ENCODE measurements at regions of chr10 and their contacts with region 1.

Region 1: GRCh38 chr10:124827474-124827873 is 25.9 kb downstream of the ABRAXAS2 start:
- DNase-seq: peak; percentile 51
- H3K4me3 ChIP-seq: no peak overlapping the region
- H3K27ac ChIP-seq: no peak overlapping the region
- H3K4me1 ChIP-seq: no peaks in the 10 kb centered on the region
- CTCF ChIP-seq: peak; percentile 84

Region 2: DNA sequence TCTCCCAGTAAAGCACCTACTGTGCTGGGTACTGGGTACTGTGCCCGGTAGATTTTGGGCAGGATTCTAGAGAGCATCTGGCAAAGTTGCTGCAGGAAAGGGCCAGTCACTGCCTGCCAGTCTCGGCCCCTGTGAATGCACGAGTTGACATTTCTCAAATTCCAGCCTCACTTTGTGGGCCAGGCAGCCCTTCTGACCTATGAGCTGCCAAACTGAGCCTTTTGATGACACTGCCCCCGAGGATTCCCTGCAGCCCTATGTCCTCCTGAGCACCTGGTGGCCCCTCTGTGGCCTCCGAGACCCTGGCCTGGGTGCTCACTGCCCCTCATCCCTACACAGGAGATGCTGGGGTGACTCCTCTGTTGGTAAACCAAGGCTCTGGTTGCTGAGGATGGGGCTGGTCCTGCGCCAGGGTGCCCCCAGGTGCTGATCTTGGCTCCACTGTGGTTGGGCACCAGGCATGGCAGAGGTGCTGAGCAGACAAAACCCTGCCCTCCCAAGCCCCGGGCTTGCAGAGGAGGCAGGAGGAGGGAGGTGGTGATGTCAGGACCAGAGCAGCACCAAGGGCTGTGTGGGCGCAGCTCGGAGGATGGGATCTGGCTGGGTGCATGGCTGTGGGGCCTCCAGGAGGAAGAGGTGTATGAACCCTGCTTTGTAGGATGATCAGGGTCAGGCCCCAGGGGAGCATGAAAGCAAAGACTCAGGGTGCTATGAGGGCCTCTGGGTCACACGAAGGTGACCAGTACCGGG is 349.7 kb before region 1 on chr10:
- CTCF ChIA-PET with region 1: no interaction called
- POLR2A ChIA-PET with region 1: no interaction called
- intact Hi-C with region 1: no loop called
- DNase-seq: no peak
- H3K4me3 ChIP-seq: no peak overlapping the region
- H3K27ac ChIP-seq: no peak overlapping the region
- H3K4me1 ChIP-seq: no peaks in the 10 kb centered on the region
- CTCF ChIP-seq: no peak

Region 3: DNA sequence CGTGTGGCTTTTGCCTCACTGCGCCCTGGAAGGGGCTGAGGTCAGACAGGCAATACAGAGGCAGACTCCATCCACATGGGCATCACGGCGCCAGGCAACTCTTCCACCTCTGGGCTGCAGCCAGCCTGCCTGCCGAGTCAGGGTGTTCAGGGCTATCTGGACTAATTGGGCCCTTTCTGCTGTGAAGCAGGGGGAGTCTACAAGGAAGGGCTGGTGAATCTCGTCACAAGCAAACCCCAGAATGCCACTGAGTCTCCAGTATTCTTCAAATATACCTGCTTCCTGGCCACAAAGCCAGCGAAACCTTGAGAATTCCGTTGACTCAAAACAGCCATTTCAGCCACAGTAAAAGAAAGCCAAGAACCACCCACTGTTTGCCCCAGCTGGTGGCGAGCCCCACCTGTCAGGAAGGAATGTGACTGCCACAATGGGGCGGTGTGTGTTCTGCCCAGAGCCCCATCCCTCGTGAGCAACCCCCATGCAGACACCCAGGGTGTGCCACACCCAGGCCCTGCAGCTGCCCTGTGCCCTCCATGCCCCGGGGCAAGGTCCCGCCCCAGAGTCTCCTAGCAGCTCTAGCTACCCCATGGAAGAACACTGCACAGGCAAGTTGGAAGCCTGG is 200.6 kb before region 1 on chr10:
- CTCF ChIA-PET with region 1: no interaction called
- POLR2A ChIA-PET with region 1: no interaction called
- intact Hi-C with region 1: loop called (anchors 10 kb)
- DNase-seq: no peak
- H3K4me3 ChIP-seq: no peak overlapping the region
- H3K27ac ChIP-seq: peak overlapping the region; percentile 7
- H3K4me1 ChIP-seq: peaks cover 21% of the 10 kb centered on the region
- CTCF ChIP-seq: no peak

Region 4: DNA sequence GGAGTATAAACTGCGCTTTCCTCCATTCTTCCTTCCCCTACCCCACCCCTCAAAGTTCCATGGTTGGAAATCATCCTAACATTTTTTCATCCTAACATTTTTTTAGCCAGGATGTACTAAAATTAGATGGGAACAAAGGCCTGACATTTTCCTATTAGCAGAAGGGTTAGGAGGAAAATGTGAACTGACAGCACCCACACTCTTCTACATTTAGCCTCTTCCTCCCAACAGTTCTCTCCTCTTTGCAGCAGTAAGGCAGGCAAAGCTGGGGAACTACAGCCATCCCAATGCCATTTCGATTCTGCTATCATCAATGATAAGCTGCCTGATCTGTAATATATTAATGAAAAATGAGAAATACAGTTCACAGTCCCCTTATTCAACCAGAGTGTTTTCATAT is 71.9 kb before region 1 on chr10:
- CTCF ChIA-PET with region 1: no interaction called
- POLR2A ChIA-PET with region 1: interaction called, 3 read pairs
- intact Hi-C with region 1: loop called (anchors 5 kb)
- DNase-seq: no peak
- H3K4me3 ChIP-seq: no peak overlapping the region
- H3K27ac ChIP-seq: no peak overlapping the region
- H3K4me1 ChIP-seq: no peaks in the 10 kb centered on the region
- CTCF ChIP-seq: no peak

Measured in OCI-LY7 (cell line).